GM10248 (cell line): ENCODE measurements at regions of chrX and their contacts with region 1.

Region 1: GRCh38 chrX:153609917-153610428 is 11.0 kb upstream of the CCNQ start:
- DNase-seq: peak; percentile 68
- CTCF ChIP-seq: peak; percentile 78

Region 2: DNA sequence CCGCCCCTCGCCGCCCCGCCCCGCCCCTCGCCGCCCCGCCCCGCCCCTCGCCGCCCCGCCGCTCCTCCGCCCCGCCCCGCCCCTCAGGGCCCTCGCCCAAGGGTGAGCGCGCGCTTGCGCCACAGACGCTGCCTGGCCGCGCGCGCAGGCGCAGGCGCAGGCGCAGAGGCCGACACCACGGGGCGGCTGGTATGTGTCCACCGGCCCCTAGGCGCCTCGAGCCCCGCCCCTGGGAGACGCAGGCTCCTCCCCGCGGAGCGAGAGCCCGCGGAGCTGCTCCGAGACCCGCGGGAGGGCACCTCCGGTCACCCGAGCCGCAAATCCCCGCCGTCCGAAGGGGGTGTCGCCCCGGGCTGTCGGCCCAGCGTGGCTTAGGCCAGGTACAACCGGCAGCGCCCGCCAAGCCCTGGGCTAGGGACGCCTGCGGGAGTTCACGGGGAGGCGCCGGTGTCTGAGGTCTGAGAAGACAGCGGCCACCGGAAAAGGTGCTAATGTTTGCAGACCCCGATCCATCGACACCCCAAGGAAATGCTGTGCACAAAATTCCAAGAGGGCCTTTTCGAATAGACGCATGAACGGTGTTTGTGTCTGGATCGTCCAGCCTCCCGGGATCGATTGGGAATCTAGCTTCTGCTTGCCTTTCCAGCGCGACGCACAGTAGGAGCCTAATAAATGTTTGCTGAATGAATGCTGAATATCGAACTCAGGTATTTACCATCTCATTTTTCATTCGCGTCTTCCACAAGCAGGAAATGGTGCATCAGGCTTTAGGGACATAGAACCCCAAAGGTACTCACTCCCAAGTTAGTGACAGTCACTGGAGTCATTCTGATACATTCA is 10.6 kb before region 1 on chrX:
- CTCF ChIA-PET with region 1: interaction called, 39 read pairs
- POLR2A ChIA-PET with region 1: no interaction called
- DNase-seq: peak; percentile 94
- CTCF ChIP-seq: no peak

Region 3: GRCh38 chrX:153623310-153624029 is 13.5 kb after region 1 on chrX:
- CTCF ChIA-PET with region 1: interaction called, 12 read pairs
- POLR2A ChIA-PET with region 1: no interaction called
- DNase-seq: no peak
- CTCF ChIP-seq: no peak